ENCODE measurements at regions of chr2 and their contacts with region 1.

Region 1: GRCh38 chr2:33134086-33134771 is 187.5 kb downstream of the LTBP1 start:
- DNase-seq: no peak

Region 2: GRCh38 chr2:33210626-33211025 is 76.4 kb after region 1 on chr2:
- intact Hi-C with region 1: loop called (anchors 5 kb)
- DNase-seq: no peak

Region 3: DNA sequence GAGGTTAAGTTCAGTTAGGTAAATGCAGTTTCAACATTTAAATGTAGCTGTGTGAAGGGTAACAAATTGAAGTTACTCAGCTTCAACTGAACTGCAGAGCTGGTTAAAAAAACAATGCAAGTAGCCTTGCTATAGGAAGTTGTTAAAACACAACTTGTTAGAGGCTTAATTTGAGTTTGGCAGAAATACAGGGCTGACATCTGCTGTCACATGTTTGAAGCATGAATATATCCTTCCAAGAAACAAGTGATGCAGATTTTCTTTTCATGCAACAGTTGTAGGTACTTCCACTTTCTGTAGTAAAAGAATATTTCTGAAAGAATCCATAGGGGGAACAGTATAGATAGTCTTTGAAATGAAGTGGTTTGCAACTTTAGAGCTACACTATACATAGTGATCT is 133.5 kb after region 1 on chr2:
- intact Hi-C with region 1: loop called (anchors 10 kb)
- DNase-seq: no peak

Measured in cardiac septum (tissue), 1 donor.